CD8-positive, alpha-beta T cell (primary cell): ENCODE measurements at regions of chr5 and their contacts with region 1.

Region 1: DNA sequence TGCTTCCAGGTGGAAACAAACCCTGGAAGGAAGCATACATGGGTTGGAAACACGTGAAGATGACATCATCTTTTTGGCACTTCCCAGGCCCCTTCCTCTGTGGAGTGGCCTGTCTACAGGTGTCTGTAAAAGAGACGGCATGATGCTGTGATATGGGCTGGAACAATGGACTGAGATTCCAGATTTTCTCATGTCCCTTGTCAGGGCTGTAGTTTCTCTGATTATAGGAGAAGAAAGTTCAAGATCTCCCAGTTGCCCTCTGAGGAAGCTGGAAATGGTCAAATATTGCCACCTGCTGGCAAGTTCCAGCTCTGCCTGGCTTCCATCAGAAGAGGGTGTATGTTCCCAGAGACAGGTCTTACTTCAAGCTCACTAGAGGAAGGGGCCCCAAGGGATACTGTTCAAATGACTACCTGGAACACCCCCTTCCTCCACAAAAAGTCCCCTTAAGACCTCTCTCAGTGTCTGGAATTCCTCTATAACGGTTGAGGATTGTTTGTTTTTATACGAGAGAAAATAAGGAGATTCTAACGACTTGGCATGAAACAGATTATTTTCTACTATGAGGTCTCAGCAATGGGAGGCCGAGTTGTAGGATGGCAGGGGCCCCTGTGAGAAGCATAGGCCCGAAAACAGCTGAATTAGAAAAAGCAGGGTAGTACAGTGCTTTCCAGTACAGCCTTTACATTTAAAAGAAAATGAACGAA is 7.3 kb upstream of the ANXA6 start:
- DNase-seq: peak; percentile 62 to 90 (median 81)
- ATAC-seq: peak; percentile 96
- H3K4me3 ChIP-seq: no peak overlapping the region
- H3K4me3 Mint-ChIP-seq: no peak overlapping the region
- H3K27ac ChIP-seq: no peak overlapping the region
- H3K27ac Mint-ChIP-seq: no peak overlapping the region
- H3K4me1 ChIP-seq: peaks cover 10% of the 10 kb centered on the region
- H3K4me1 Mint-ChIP-seq: peaks cover 30% of the 10 kb centered on the region
- H3K27me3 ChIP-seq: no peaks in the 10 kb centered on the region
- H3K27me3 Mint-ChIP-seq: no peaks in the 10 kb centered on the region
- CTCF ChIP-seq: peak; percentile 92

Region 2: GRCh38 chr5:150489360-150490295 is 675.2 kb before region 1 on chr5:
- CTCF ChIA-PET with region 1: no interaction called
- POLR2A ChIA-PET with region 1: no interaction called
- intact Hi-C with region 1: no loop called
- DNase-seq: peak in 1 of 9 experiments; percentile 15
- ATAC-seq: no peak
- H3K4me3 ChIP-seq: no peak overlapping the region
- H3K4me3 Mint-ChIP-seq: no peak overlapping the region
- H3K27ac ChIP-seq: no peak overlapping the region
- H3K27ac Mint-ChIP-seq: no peak overlapping the region
- H3K4me1 ChIP-seq: no peaks in the 10 kb centered on the region
- H3K4me1 Mint-ChIP-seq: peaks cover 11% of the 10 kb centered on the region
- H3K27me3 ChIP-seq: peaks cover 0 to 2% of the 10 kb centered on the region in 2 experiments
- H3K27me3 Mint-ChIP-seq: peaks cover 14% of the 10 kb centered on the region
- CTCF ChIP-seq: no peak

Region 3: DNA sequence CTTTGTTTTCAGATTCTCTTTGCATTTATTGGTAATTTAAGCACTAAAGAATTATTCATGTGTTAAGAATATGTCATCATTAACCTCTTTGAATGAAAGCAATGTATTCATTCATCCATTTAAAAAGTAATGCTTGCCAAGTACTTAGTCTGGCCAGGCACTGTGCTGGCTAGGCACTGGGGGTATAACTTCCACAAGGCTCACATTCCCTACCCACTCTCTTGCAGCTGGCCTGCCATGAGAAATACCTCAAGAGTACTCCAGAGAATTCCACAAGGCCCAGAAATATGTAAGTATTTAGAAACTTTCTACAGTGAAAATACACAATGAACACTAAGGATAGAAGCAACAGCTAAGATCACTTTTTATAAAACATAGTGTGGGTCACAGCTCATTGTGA is 285.5 kb before region 1 on chr5:
- CTCF ChIA-PET with region 1: no interaction called
- POLR2A ChIA-PET with region 1: no interaction called
- intact Hi-C with region 1: no loop called
- DNase-seq: no peak
- ATAC-seq: no peak
- H3K4me3 ChIP-seq: no peak overlapping the region
- H3K4me3 Mint-ChIP-seq: no peak overlapping the region
- H3K27ac ChIP-seq: no peak overlapping the region
- H3K27ac Mint-ChIP-seq: no peak overlapping the region
- H3K4me1 ChIP-seq: no peaks in the 10 kb centered on the region
- H3K4me1 Mint-ChIP-seq: no peaks in the 10 kb centered on the region
- H3K27me3 ChIP-seq: no peaks in the 10 kb centered on the region
- H3K27me3 Mint-ChIP-seq: no peaks in the 10 kb centered on the region
- CTCF ChIP-seq: no peak

Region 4: GRCh38 chr5:151063142-151063949 is 101.5 kb before region 1 on chr5:
- CTCF ChIA-PET with region 1: interaction called, 10 read pairs
- POLR2A ChIA-PET with region 1: no interaction called
- intact Hi-C with region 1: no loop called
- DNase-seq: no peak
- ATAC-seq: no peak
- H3K4me3 ChIP-seq: no peak overlapping the region
- H3K4me3 Mint-ChIP-seq: no peak overlapping the region
- H3K27ac ChIP-seq: no peak overlapping the region
- H3K27ac Mint-ChIP-seq: peak overlapping the region; percentile 50
- H3K4me1 ChIP-seq: peaks cover 15% of the 10 kb centered on the region
- H3K4me1 Mint-ChIP-seq: peaks cover 45% of the 10 kb centered on the region
- H3K27me3 ChIP-seq: no peaks in the 10 kb centered on the region
- H3K27me3 Mint-ChIP-seq: no peaks in the 10 kb centered on the region
- CTCF ChIP-seq: no peak

Region 5: GRCh38 chr5:151141535-151141934 is 23.3 kb before region 1 on chr5:
- CTCF ChIA-PET with region 1: interaction called, 1,723 read pairs
- POLR2A ChIA-PET with region 1: interaction called, 10 read pairs
- intact Hi-C with region 1: no loop called
- DNase-seq: peak in 8 of 9 experiments; percentile 42 to 85 (median 69)
- ATAC-seq: peak; percentile 51
- H3K4me3 ChIP-seq: peak overlapping the region; percentile 10 to 43
- H3K4me3 Mint-ChIP-seq: peak overlapping the region; percentile 82
- H3K27ac ChIP-seq: peak overlapping the region; percentile 26 to 90
- H3K27ac Mint-ChIP-seq: peak overlapping the region; percentile 95
- H3K4me1 ChIP-seq: peaks cover 93% of the 10 kb centered on the region
- H3K4me1 Mint-ChIP-seq: peaks cover 98% of the 10 kb centered on the region
- H3K27me3 ChIP-seq: no peaks in the 10 kb centered on the region
- H3K27me3 Mint-ChIP-seq: no peaks in the 10 kb centered on the region
- CTCF ChIP-seq: no peak

Region 6: DNA sequence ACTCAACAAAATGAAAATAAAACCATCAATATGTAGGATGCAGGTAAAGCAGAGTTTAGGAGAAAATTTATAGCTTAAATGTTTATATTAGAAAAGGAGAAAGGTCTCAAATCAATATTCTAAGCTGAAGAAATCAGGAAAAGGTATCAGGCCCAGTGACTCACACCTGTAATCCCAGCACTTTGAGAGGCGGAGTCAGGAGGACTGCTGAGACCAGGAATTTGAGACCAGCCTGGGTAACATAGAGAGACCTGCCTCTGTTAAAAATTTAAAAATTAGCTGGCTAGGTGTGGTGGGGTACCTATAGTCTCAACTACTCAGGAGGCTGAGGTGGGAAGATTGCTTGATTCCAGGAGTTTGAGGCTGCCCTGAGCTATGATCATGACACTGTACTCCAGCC is 26.8 kb after region 1 on chr5:
- CTCF ChIA-PET with region 1: interaction called, 13 read pairs
- POLR2A ChIA-PET with region 1: interaction called, 3 read pairs
- intact Hi-C with region 1: no loop called
- DNase-seq: peak in 1 of 9 experiments; percentile 17
- ATAC-seq: no peak
- H3K4me3 ChIP-seq: no peak overlapping the region
- H3K4me3 Mint-ChIP-seq: no peak overlapping the region
- H3K27ac ChIP-seq: no peak overlapping the region
- H3K27ac Mint-ChIP-seq: peak overlapping the region; percentile 45
- H3K4me1 ChIP-seq: peaks cover 24% of the 10 kb centered on the region
- H3K4me1 Mint-ChIP-seq: peaks cover 61% of the 10 kb centered on the region
- H3K27me3 ChIP-seq: no peaks in the 10 kb centered on the region
- H3K27me3 Mint-ChIP-seq: no peaks in the 10 kb centered on the region
- CTCF ChIP-seq: no peak

Region 7: GRCh38 chr5:151223469-151224264 is 58.8 kb after region 1 on chr5 and contains the start of gene CCDC69:
- CTCF ChIA-PET with region 1: interaction called, 39 read pairs
- POLR2A ChIA-PET with region 1: interaction called, 7 read pairs
- intact Hi-C with region 1: no loop called
- DNase-seq: peak in 8 of 9 experiments; percentile 34 to 78 (median 58)
- ATAC-seq: peak; percentile 47
- H3K4me3 ChIP-seq: peak within 1 kb of the TSS; percentile 67 to 95
- H3K4me3 Mint-ChIP-seq: peak within 1 kb of the TSS; percentile 89
- H3K27ac ChIP-seq: peak within 1 kb of the TSS; percentile 69 to 86
- H3K27ac Mint-ChIP-seq: peak within 1 kb of the TSS; percentile 96
- H3K4me1 ChIP-seq: peaks cover 58% of the 10 kb centered on the region
- H3K4me1 Mint-ChIP-seq: peaks cover 58% of the 10 kb centered on the region
- H3K27me3 ChIP-seq: no peaks in the 10 kb centered on the region
- H3K27me3 Mint-ChIP-seq: no peaks in the 10 kb centered on the region
- CTCF ChIP-seq: no peak
- total RNA-seq, gene CCDC69: 96.3 to 98.5 TPM

Region 8: GRCh38 chr5:151264113-151264512 is 99.3 kb after region 1 on chr5:
- CTCF ChIA-PET with region 1: no interaction called
- POLR2A ChIA-PET with region 1: no interaction called
- intact Hi-C with region 1: no loop called
- DNase-seq: no peak
- ATAC-seq: no peak
- H3K4me3 ChIP-seq: no peak overlapping the region
- H3K4me3 Mint-ChIP-seq: no peak overlapping the region
- H3K27ac ChIP-seq: no peak overlapping the region
- H3K27ac Mint-ChIP-seq: no peak overlapping the region
- H3K4me1 ChIP-seq: no peaks in the 10 kb centered on the region
- H3K4me1 Mint-ChIP-seq: no peaks in the 10 kb centered on the region
- H3K27me3 ChIP-seq: no peaks in the 10 kb centered on the region
- H3K27me3 Mint-ChIP-seq: no peaks in the 10 kb centered on the region
- CTCF ChIP-seq: no peak